Natural killer cell (primary cell): ENCODE measurements at regions of chr14 and their contacts with region 1.

Region 1: GRCh38 chr14:97458661-97459579 is 661.7 kb downstream of the VRK1 start:
- DNase-seq: peak; percentile 58 to 90
- ATAC-seq: peak; percentile 61 to 77 (median 75)
- H3K4me3 ChIP-seq: peak overlapping the region; percentile 33
- H3K4me3 Mint-ChIP-seq: peak overlapping the region; percentile 93
- H3K27ac ChIP-seq: peak overlapping the region; percentile 94
- H3K27ac Mint-ChIP-seq: peak overlapping the region; percentile 97 to 99
- H3K4me1 ChIP-seq: peaks cover 60% of the 10 kb centered on the region
- H3K4me1 Mint-ChIP-seq: peaks cover 80 to 82% of the 10 kb centered on the region in 2 donors
- H3K27me3 ChIP-seq: no peaks in the 10 kb centered on the region
- H3K27me3 Mint-ChIP-seq: no peaks in the 10 kb centered on the region
- CTCF ChIP-seq: no peak

Region 2: DNA sequence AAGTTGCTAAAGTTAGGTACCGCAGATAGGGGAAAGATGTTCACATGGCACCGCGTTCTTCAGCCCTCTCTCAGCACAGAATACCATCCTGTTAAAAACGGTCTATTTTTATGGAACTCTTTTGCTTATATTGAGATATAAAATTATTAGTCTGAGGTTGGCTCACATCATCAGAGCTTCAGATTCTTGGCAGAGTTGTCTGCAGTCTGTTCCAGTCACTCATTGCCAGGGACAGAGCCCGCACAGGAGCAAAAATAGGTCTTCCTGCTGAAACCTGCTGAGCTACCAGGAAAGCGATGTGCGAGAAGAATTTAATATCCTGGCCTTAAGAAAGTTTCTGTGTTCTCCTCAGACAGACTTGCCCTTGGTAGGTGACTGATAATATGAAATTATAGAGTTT is 412.0 kb before region 1 on chr14:
- intact Hi-C with region 1: no loop called
- DNase-seq: no peak
- ATAC-seq: no peak
- H3K4me3 ChIP-seq: no peak overlapping the region
- H3K4me3 Mint-ChIP-seq: no peak overlapping the region
- H3K27ac ChIP-seq: no peak overlapping the region
- H3K27ac Mint-ChIP-seq: no peak overlapping the region
- H3K4me1 ChIP-seq: no peaks in the 10 kb centered on the region
- H3K4me1 Mint-ChIP-seq: no peaks in the 10 kb centered on the region
- H3K27me3 ChIP-seq: peaks cover 3% of the 10 kb centered on the region
- H3K27me3 Mint-ChIP-seq: peaks cover 18 to 38% of the 10 kb centered on the region in 2 donors
- CTCF ChIP-seq: no peak

Region 3: DNA sequence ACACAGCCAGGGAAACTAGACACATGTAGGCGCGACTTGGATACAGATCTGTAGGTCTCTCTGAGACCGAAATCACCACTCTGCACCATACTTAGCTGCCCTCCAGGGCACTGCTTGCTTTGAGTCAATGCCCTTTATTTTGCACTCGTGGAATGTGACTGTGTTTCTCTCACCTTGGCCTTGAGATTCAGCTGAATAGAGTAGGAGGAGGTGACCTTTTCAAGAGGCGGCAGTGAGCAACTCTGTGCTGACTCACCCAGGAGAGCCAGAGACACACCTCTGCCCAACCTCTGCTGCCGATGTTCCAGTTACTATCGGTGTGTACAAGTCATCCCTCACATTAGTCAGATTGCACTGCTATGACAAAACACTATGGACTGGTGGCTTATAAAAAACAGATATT is 78.4 kb before region 1 on chr14:
- intact Hi-C with region 1: loop called (anchors 5 kb)
- DNase-seq: peak; percentile 16 to 19
- ATAC-seq: peak; percentile 38 to 79 (median 52)
- H3K4me3 ChIP-seq: no peak overlapping the region
- H3K4me3 Mint-ChIP-seq: peak overlapping the region; percentile 86
- H3K27ac ChIP-seq: peak overlapping the region; percentile 43
- H3K27ac Mint-ChIP-seq: peak overlapping the region; percentile 92 to 100
- H3K4me1 ChIP-seq: peaks cover 48% of the 10 kb centered on the region
- H3K4me1 Mint-ChIP-seq: peaks cover 68 to 76% of the 10 kb centered on the region in 2 donors
- H3K27me3 ChIP-seq: no peaks in the 10 kb centered on the region
- H3K27me3 Mint-ChIP-seq: no peaks in the 10 kb centered on the region
- CTCF ChIP-seq: no peak

Region 4: GRCh38 chr14:97420211-97420610 is 38.7 kb before region 1 on chr14:
- intact Hi-C with region 1: no loop called
- DNase-seq: no peak
- ATAC-seq: no peak
- H3K4me3 ChIP-seq: no peak overlapping the region
- H3K4me3 Mint-ChIP-seq: no peak overlapping the region
- H3K27ac ChIP-seq: no peak overlapping the region
- H3K27ac Mint-ChIP-seq: no peak overlapping the region
- H3K4me1 ChIP-seq: no peaks in the 10 kb centered on the region
- H3K4me1 Mint-ChIP-seq: peaks cover 4 to 7% of the 10 kb centered on the region in 2 donors
- H3K27me3 ChIP-seq: peaks cover 2% of the 10 kb centered on the region
- H3K27me3 Mint-ChIP-seq: peaks cover 5 to 20% of the 10 kb centered on the region in 2 donors
- CTCF ChIP-seq: no peak

Region 5: DNA sequence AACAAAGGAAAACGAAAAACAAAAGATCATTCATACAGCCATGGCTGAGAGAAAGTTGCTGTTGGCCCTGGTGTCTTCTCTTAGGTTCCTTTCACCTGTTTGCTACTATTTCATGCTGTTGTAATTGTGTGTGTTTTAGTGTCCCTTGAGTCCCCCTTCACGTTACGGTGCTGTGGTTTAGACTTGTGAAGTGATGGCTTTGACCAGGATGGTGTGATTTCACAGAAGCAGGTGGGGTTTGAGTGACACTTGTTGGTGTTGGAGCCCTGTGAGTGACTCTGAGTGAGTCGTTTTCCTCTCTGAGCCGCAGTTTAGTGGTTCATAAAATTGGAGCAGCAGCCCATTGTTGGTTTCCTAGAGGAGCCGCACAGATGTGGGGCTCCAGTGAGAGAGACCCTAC is 26.3 kb before region 1 on chr14:
- intact Hi-C with region 1: loop called (anchors 1 kb)
- DNase-seq: peak; percentile 29 to 39
- ATAC-seq: peak; percentile 77 to 96 (median 87)
- H3K4me3 ChIP-seq: no peak overlapping the region
- H3K4me3 Mint-ChIP-seq: peak overlapping the region; percentile 33
- H3K27ac ChIP-seq: no peak overlapping the region
- H3K27ac Mint-ChIP-seq: peak overlapping the region; percentile 11 to 39
- H3K4me1 ChIP-seq: peaks cover 20% of the 10 kb centered on the region
- H3K4me1 Mint-ChIP-seq: peaks cover 31 to 36% of the 10 kb centered on the region in 2 donors
- H3K27me3 ChIP-seq: no peaks in the 10 kb centered on the region
- H3K27me3 Mint-ChIP-seq: peaks cover 4 to 7% of the 10 kb centered on the region in 2 donors
- CTCF ChIP-seq: no peak

Region 6: GRCh38 chr14:97499792-97500495 is 41.0 kb after region 1 on chr14:
- intact Hi-C with region 1: no loop called
- DNase-seq: no peak
- ATAC-seq: no peak
- H3K4me3 ChIP-seq: no peak overlapping the region
- H3K4me3 Mint-ChIP-seq: no peak overlapping the region
- H3K27ac ChIP-seq: no peak overlapping the region
- H3K27ac Mint-ChIP-seq: no peak overlapping the region
- H3K4me1 ChIP-seq: no peaks in the 10 kb centered on the region
- H3K4me1 Mint-ChIP-seq: peaks cover 0 to 5% of the 10 kb centered on the region in 2 donors
- H3K27me3 ChIP-seq: no peaks in the 10 kb centered on the region
- H3K27me3 Mint-ChIP-seq: peaks cover 15 to 64% of the 10 kb centered on the region in 2 donors
- CTCF ChIP-seq: no peak

Region 7: GRCh38 chr14:97602438-97603117 is 143.7 kb after region 1 on chr14:
- intact Hi-C with region 1: loop called (anchors 5 kb)
- DNase-seq: peak; percentile 34 to 90
- ATAC-seq: peak; percentile 79 to 90 (median 84)
- H3K4me3 ChIP-seq: no peak overlapping the region
- H3K4me3 Mint-ChIP-seq: no peak overlapping the region
- H3K27ac ChIP-seq: peak overlapping the region; percentile 69
- H3K27ac Mint-ChIP-seq: no peak overlapping the region
- H3K4me1 ChIP-seq: peaks cover 32% of the 10 kb centered on the region
- H3K4me1 Mint-ChIP-seq: peaks cover 22 to 30% of the 10 kb centered on the region in 2 donors
- H3K27me3 ChIP-seq: no peaks in the 10 kb centered on the region
- H3K27me3 Mint-ChIP-seq: no peaks in the 10 kb centered on the region
- CTCF ChIP-seq: no peak